Activated T-helper 2 cell treated with anti-CD3 and anti-CD28 coated beads, Interferon-gamma antibody, Interleukin-2, Interleukin-4, amounts not matched to agents 10 μg/mL and 5 μg/mL and 100 μg/mL, durations not matched to agents 14 hours and 24 hours and 36 hours (primary cell): ENCODE measurements at regions of chr1 and their contacts with region 1.

Region 1: DNA sequence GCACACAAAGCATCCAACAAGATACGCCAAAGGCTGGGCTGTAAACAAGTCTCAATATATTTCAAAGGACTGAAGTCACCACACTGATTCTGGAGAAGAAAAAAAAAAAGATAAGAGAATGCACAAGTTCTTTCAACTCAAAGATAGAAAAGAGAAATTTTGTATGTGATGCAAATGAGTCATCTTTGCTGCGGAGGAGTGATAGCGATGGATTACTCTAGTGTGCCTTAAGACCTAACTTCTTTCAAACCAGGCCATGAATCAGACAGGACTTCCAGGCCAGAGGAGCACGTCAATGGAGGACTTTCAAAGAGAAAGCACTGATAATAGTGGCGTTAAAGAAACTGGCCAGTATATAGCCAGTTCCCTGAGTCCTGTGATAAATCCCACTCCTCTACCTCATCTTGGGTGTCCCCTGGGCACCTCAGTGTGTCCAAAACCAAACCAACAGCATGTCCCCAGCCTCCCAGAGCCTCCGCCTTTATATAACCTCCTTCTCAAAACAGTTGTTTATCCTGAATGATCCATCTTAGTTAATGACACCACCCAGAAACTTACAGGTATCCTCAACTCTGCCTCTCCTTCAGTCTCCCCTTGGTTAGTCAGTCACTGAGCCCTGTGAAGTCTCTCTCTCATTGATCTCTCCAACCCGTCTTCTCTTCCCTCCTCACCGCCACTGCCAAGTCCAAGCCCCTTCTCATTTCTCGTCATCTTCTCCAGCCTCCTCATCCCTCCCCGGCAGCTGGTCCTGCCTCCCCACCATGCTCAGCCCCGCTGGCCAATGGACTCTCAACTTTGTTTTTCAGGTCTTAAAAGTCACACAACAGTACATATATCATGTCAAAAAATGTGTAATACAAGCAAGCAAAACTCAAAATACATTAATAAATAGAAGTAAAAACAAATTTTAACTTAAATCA is 47.2 kb upstream of the IFFO2 start:
- DNase-seq: no peak
- H3K4me3 Mint-ChIP-seq: peak overlapping the region; percentile 24
- H3K27ac Mint-ChIP-seq: peak overlapping the region; percentile 96
- H3K4me1 Mint-ChIP-seq: peaks cover 27% of the 10 kb centered on the region
- H3K27me3 Mint-ChIP-seq: no peaks in the 10 kb centered on the region

Region 2: DNA sequence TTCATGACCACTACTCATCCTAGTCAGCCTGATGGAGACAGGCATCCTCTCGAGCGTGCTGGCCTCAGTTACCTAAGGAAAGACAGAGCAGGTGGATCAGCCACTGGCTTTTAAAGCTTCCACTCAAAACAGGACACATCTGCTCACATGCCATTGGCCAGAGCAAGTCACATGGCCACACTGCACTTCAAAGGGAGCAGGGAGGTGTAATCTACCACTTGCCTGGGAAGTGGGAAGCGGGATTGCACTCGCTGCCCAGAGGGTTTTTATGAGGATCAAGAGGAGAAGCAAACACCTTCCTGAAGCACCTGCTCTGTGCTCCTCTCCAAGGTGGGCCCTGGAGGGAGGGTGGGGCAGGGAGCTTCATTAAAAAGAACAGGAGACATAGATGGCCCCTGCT is 252.2 kb before region 1 on chr1:
- intact Hi-C with region 1: no loop called
- DNase-seq: no peak
- H3K4me3 Mint-ChIP-seq: no peak overlapping the region
- H3K27ac Mint-ChIP-seq: no peak overlapping the region
- H3K4me1 Mint-ChIP-seq: no peaks in the 10 kb centered on the region
- H3K27me3 Mint-ChIP-seq: peaks cover 1% of the 10 kb centered on the region

Region 3: GRCh38 chr1:18956369-18957135 is 47.1 kb before region 1 on chr1 and contains the start of gene IFFO2:
- intact Hi-C with region 1: loop called (anchors 5 kb)
- DNase-seq: peak; percentile 96
- H3K4me3 Mint-ChIP-seq: peak within 1 kb of the TSS; percentile 86
- H3K27ac Mint-ChIP-seq: peak within 1 kb of the TSS; percentile 83
- H3K4me1 Mint-ChIP-seq: peaks cover 49% of the 10 kb centered on the region
- H3K27me3 Mint-ChIP-seq: peaks cover 6% of the 10 kb centered on the region
- total RNA-seq, gene IFFO2: 48.5 and 49.4 TPM in 2 replicates

Region 4: DNA sequence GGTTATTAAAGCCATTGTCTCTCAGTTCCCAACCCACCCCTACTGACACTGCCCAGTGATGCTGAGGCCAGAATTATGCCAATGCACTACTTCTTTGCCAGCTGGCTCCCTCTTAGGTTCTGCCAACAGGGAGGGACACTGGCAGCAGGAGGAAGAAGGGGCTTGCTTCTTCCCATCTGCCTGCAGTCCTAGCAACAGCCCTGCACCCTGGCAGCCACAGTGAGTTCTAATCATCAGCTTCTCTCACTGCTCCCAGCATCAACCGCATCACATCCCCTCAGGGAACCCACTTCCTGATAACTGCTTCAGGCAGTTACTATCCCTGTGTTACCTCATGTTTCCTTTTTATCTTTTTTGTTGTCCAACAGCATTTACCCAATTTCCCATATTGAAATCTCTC is 120.2 kb after region 1 on chr1:
- intact Hi-C with region 1: no loop called
- DNase-seq: peak; percentile 20
- H3K4me3 Mint-ChIP-seq: peak overlapping the region; percentile 20
- H3K27ac Mint-ChIP-seq: peak overlapping the region; percentile 58
- H3K4me1 Mint-ChIP-seq: peaks cover 29% of the 10 kb centered on the region
- H3K27me3 Mint-ChIP-seq: no peaks in the 10 kb centered on the region